ENCODE measurements at regions of chr21 and their contacts with region 1.

Region 1: DNA sequence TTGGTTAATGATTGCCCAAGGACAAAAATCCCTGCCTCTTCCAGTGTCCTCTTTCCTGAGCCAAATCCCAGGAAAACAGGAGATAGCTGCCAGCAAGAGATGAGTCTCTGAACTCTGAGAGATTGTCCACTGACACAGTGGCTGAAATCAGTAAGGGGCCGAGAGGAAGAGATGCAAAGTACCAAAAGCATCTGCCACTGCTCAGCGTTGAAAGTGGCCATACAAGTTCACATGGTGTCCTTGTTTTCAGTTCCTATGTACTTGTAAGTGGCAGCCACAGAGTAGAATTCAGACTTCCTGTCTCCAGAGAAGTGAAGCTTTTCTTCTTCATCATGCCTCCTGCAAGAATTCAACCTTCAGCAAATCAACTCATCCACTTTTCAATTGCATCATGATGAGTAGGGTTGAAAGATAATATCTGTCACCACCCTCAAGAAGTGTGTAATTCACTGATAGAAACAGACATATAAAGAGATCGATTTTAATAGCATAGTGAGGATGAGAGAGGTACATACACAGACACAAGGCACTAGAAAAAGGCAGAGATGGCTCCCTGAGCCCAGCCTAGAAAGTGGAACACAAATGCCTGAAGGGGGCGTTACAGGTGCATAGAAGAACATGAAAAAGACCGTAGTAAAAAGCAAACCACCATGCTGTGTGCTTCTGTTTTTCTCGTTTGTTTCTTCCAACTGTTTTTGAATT is 185.8 kb downstream of the MRPL39 start:
- DNase-seq: peak; percentile 86
- ATAC-seq: peak; percentile 80
- H3K4me3 ChIP-seq: peak overlapping the region in 2 of 5 experiments; percentile 6 to 48
- H3K4me3 Mint-ChIP-seq: peak overlapping the region; percentile 75
- H3K27ac ChIP-seq: peak overlapping the region; percentile 86 to 92
- H3K27ac Mint-ChIP-seq: peak overlapping the region; percentile 90
- H3K4me1 ChIP-seq: peaks cover 31 to 47% of the 10 kb centered on the region in 2 donors
- H3K4me1 Mint-ChIP-seq: peaks cover 46% of the 10 kb centered on the region
- H3K27me3 ChIP-seq: no peaks in the 10 kb centered on the region
- H3K27me3 Mint-ChIP-seq: no peaks in the 10 kb centered on the region
- CTCF ChIP-seq: peak; percentile 85

Region 2: DNA sequence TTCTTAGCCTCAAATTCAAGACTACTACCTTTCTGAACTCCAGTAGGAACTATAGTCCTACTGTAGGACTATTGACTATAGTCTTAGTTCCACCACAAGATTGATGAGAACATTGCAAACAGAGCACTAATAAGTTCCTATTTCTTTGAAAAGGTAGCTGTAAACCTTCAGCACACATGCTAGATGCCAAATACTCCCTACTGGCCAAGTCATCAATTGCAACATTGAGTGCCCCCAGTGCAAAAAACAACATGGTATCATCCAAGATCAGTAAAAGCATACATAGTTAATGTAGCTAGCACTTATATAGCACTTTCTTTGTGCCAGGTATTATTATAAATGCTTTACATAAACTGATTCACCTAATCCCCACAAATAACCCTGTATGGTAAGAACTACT is 86.0 kb after region 1 on chr21:
- CTCF ChIA-PET with region 1: no interaction called
- POLR2A ChIA-PET with region 1: no interaction called
- intact Hi-C with region 1: loop called (anchors 5 kb)
- DNase-seq: peak; percentile 16
- ATAC-seq: no peak
- H3K4me3 ChIP-seq: no peak overlapping the region
- H3K4me3 Mint-ChIP-seq: no peak overlapping the region
- H3K27ac ChIP-seq: no peak overlapping the region
- H3K27ac Mint-ChIP-seq: no peak overlapping the region
- H3K4me1 ChIP-seq: peaks cover 4 to 11% of the 10 kb centered on the region in 2 donors
- H3K4me1 Mint-ChIP-seq: peaks cover 34% of the 10 kb centered on the region
- H3K27me3 ChIP-seq: no peaks in the 10 kb centered on the region
- H3K27me3 Mint-ChIP-seq: no peaks in the 10 kb centered on the region
- CTCF ChIP-seq: peak; percentile 26

Region 3: DNA sequence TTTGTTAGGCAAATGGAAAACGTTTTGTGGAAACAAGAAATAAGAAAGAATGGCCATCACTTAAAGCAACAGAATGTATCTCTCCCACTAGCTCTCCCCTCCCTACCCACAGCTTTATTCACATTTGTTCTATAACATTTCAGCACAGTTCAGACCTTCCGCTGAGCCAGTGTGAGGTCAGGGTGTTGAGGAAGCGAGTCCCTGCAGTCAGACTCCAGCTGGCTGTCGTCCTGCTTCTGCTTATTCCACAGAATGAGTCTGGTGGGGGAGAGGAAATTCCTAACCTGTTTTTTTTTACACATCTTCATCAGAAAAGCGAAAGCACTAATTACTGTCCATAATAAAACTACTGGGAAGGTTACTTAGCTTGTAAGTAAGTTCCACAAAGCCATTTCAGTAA is 146.8 kb after region 1 on chr21:
- CTCF ChIA-PET with region 1: interaction called, 8 read pairs
- POLR2A ChIA-PET with region 1: interaction called, 9 read pairs
- intact Hi-C with region 1: loop called (anchors 2 kb)
- DNase-seq: peak; percentile 54
- ATAC-seq: peak; percentile 22
- H3K4me3 ChIP-seq: no peak overlapping the region
- H3K4me3 Mint-ChIP-seq: peak overlapping the region; percentile 61
- H3K27ac ChIP-seq: peak overlapping the region; percentile 33 to 65
- H3K27ac Mint-ChIP-seq: peak overlapping the region; percentile 81
- H3K4me1 ChIP-seq: peaks cover 50 to 61% of the 10 kb centered on the region in 2 donors
- H3K4me1 Mint-ChIP-seq: peaks cover 86% of the 10 kb centered on the region
- H3K27me3 ChIP-seq: no peaks in the 10 kb centered on the region
- H3K27me3 Mint-ChIP-seq: no peaks in the 10 kb centered on the region
- CTCF ChIP-seq: no peak

Region 4: DNA sequence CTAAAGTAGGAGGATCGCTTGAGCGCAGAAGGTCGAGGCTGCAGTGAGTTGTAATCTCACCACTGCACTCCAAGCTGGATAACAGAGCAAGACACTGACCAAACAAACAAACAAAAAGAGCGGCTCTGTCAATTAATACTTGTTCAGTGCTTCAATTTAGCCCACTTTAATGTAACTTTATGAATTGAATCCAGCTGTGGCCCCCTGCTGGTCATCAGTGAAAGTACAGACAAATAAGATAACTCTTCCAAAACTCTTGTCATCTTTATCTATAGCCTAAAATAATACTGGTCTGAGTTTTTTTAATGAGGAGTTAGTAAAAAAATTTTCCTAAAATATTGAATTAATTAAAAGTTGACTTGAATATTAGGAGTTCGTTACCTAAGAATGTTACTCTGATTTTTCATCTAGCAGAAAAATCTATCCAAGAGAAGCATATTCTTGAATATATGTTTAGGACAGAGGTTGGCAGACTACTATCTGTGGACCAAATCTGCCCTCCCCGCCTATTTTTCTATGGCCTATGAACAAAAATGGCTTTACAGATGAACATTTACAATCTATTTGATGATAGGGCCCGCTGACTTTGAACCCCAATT is 287.1 kb after region 1 on chr21:
- CTCF ChIA-PET with region 1: interaction called, 9 read pairs
- POLR2A ChIA-PET with region 1: no interaction called
- intact Hi-C with region 1: loop called (anchors 1 kb)
- DNase-seq: peak; percentile 72
- ATAC-seq: peak; percentile 36
- H3K4me3 ChIP-seq: no peak overlapping the region
- H3K4me3 Mint-ChIP-seq: no peak overlapping the region
- H3K27ac ChIP-seq: no peak overlapping the region
- H3K27ac Mint-ChIP-seq: no peak overlapping the region
- H3K4me1 ChIP-seq: no peaks in the 10 kb centered on the region
- H3K4me1 Mint-ChIP-seq: no peaks in the 10 kb centered on the region
- H3K27me3 ChIP-seq: no peaks in the 10 kb centered on the region
- H3K27me3 Mint-ChIP-seq: no peaks in the 10 kb centered on the region
- CTCF ChIP-seq: peak; percentile 98

Region 5: GRCh38 chr21:26185021-26185420 is 763.5 kb after region 1 on chr21:
- CTCF ChIA-PET with region 1: no interaction called
- POLR2A ChIA-PET with region 1: no interaction called
- intact Hi-C with region 1: no loop called
- DNase-seq: no peak
- ATAC-seq: no peak
- H3K4me3 ChIP-seq: no peak overlapping the region
- H3K4me3 Mint-ChIP-seq: no peak overlapping the region
- H3K27ac ChIP-seq: no peak overlapping the region
- H3K27ac Mint-ChIP-seq: no peak overlapping the region
- H3K4me1 ChIP-seq: no peaks in the 10 kb centered on the region
- H3K4me1 Mint-ChIP-seq: no peaks in the 10 kb centered on the region
- H3K27me3 ChIP-seq: peaks cover 0 to 8% (median 2%) of the 10 kb centered on the region in 4 experiments
- H3K27me3 Mint-ChIP-seq: no peaks in the 10 kb centered on the region
- CTCF ChIP-seq: no peak